ENCODE measurements at regions of chr14 and their contacts with region 1.

Region 1: DNA sequence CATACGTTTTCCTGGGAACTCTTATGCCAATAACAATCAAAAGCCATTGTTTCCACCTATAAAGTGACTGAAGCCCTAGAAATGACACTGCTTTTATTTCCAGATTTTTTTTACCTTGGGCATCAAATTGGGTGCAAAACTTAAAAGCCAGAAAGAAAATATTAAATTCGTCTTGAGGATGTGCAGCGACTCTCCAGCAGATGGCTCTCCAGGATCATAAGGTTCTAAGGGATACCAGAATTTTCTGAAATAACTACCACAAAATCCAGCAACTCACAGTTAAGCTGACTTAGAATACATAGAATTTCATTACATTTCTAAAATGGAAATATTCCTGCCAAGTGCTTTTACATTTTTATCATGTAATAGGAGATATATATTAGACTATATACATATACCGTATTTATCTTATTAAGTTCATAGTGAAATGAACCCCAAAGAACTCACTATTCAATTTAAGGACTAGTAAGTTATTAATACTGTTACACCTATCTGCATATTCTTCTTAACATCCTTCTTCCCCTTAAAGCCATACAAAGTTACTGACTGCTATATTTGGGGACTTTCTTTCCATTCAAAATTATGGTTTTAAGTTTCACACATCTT is 44.0 kb downstream of the ARMH4 start:
- DNase-seq: peak in 6 of 9 experiments; percentile 6 to 67 (median 27)
- ATAC-seq: peak; percentile 51
- H3K4me3 ChIP-seq: no peak overlapping the region
- H3K4me3 Mint-ChIP-seq: no peak overlapping the region
- H3K27ac ChIP-seq: no peak overlapping the region
- H3K27ac Mint-ChIP-seq: no peak overlapping the region
- H3K4me1 ChIP-seq: no peaks in the 10 kb centered on the region
- H3K4me1 Mint-ChIP-seq: no peaks in the 10 kb centered on the region
- H3K27me3 ChIP-seq: no peaks in the 10 kb centered on the region
- H3K27me3 Mint-ChIP-seq: peaks cover 16% of the 10 kb centered on the region
- CTCF ChIP-seq: peak; percentile 77

Region 2: DNA sequence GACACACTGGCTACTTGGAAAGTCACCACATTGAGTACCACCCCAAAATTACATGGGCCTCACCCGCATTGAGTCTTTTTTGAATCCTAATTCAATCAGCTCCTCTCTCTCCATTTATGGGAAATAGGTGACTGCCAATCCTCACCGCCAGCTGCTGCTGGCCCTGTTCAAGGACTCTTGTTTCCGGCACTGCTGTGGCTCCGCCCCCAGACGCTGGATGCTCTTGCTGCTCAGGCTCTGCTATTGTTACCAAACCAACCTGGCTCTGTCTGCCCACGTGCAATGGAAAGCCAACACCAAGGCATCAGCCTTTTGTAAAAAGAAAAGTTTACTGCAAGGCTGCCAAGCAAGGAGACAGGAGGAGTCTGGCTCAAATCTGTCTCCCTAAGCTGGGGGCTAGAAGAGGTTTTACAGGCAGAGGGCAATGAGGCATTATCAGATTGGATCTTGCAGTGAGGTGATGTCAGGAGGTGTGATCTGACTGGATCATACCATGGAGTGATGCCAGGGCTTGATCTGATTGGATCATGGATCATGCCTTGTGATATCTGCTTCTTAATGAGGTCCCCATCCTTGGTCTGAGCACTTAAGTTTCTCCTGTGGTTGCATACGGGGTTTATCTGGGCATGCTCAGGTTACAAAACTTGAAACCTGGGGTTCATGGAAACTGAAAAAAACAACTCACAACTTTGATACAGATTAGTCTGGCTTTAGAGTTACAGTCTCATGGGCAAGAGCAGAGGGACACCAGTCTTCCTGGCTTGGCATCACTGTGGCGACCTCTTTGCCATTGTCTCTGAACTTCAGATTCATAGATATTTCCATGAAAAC is 125.0 kb before region 1 on chr14:
- CTCF ChIA-PET with region 1: no interaction called
- POLR2A ChIA-PET with region 1: no interaction called
- intact Hi-C with region 1: no loop called
- DNase-seq: no peak
- ATAC-seq: no peak
- H3K4me3 ChIP-seq: no peak overlapping the region
- H3K4me3 Mint-ChIP-seq: no peak overlapping the region
- H3K27ac ChIP-seq: no peak overlapping the region
- H3K27ac Mint-ChIP-seq: no peak overlapping the region
- H3K4me1 ChIP-seq: no peaks in the 10 kb centered on the region
- H3K4me1 Mint-ChIP-seq: no peaks in the 10 kb centered on the region
- H3K27me3 ChIP-seq: no peaks in the 10 kb centered on the region
- H3K27me3 Mint-ChIP-seq: peaks cover 2% of the 10 kb centered on the region
- CTCF ChIP-seq: no peak

Region 3: DNA sequence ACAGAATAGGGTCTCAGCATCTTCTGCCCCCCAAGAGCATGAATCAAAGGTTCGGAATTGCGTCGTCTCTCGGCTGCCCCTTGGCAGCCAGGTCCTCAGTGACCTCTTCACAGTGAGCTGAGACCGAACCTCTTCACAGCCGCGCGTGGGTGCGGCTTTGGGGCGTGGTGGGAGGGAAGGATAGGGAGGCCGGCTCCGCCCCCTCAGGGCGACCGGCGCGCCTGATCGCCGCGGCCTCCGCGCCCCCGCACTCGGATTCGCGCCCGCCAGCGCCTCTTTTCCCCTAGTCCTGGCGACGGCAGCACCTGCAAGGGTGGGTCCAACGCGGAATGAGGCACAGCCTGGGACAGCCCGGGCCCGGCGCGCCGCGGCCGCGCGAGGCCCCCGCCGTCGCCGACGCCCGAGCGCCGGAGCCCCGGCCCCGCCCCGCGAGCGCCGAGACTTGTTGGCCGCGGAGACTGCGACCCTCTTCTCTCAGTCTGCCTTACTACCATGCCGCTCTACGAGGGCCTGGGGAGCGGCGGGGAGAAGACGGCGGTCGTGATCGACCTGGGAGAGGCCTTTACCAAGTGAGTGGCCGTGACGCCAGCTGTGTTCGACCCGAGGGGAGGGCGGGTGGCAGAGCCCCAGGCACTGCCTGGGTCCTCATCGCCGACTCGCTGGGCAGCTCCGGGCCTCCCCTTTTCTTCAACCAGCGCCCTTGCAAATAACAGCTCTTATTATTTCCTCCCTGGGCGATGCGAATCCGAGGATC is 91.9 kb after region 1 on chr14 and contains the start of gene ACTR10:
- CTCF ChIA-PET with region 1: no interaction called
- POLR2A ChIA-PET with region 1: no interaction called
- intact Hi-C with region 1: loop called in 1 of 2 experiments (anchors 1 kb)
- DNase-seq: peak; percentile 76 to 95 (median 85)
- ATAC-seq: peak; percentile 87
- H3K4me3 ChIP-seq: peak within 1 kb of the TSS; percentile 75 to 92
- H3K4me3 Mint-ChIP-seq: peak within 1 kb of the TSS; percentile 94
- H3K27ac ChIP-seq: peak within 1 kb of the TSS; percentile 86 to 87
- H3K27ac Mint-ChIP-seq: peak within 1 kb of the TSS; percentile 98
- H3K4me1 ChIP-seq: peaks cover 25% of the 10 kb centered on the region
- H3K4me1 Mint-ChIP-seq: peaks cover 46% of the 10 kb centered on the region
- H3K27me3 ChIP-seq: no peaks in the 10 kb centered on the region
- H3K27me3 Mint-ChIP-seq: no peaks in the 10 kb centered on the region
- CTCF ChIP-seq: no peak
- total RNA-seq, gene ACTR10: 47.5 to 47.7 TPM

Region 4: DNA sequence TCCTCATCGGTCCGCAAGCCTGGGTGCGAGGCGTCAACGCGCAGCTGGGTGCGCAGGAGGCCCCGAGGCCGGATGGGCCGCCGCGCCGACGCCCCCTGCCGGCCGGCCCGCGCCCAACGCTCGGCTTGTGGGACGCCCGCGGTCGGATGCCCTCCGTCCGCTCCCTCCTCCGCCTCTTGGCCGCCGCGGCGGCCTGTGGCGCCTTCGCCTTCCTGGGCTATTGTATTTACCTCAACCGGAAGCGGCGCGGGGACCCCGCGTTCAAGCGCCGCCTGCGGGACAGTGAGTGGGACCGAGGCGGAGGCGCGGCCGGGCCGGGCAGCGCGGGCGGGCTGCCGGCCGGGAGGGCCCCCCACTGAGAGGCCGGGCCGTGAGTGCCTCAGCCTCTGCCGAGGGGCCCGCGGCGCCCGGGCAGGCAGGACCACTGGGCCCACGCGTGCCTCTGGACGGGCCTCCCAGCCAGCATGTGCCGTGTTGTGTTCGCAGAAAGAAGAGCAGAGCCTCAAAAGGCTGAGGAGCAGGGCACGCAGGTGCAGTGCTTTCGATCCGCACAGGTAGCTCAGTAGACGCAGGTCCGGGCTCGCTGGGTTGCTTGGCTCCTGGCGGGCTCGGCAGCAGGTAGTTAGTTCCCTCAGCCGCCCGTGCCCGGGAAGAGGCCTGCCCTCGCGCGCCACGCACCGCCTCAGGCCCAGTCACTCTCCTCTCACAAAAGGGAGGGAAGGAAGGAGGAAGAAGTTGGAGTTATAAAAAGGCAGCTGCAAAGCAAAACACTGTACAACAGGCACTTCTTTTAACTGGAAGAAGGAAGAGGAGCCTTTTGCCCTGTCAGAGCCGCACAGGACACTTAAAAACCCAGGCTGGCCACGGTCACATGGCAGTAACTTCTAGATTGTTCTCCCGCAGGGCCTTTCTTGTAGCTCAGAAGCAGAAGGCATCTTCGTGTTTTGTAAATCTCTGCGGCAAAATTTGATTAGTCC is 288.1 kb after region 1 on chr14 and contains the start of gene TOMM20L:
- CTCF ChIA-PET with region 1: interaction called, 5 read pairs
- POLR2A ChIA-PET with region 1: no interaction called
- intact Hi-C with region 1: loop called (anchors 1 to 2 kb)
- DNase-seq: peak; percentile 48 to 86 (median 69)
- ATAC-seq: peak; percentile 81
- H3K4me3 ChIP-seq: peak within 1 kb of the TSS; percentile 27 to 59
- H3K4me3 Mint-ChIP-seq: peak within 1 kb of the TSS; percentile 84
- H3K27ac ChIP-seq: peak within 1 kb of the TSS; percentile 69 to 75
- H3K27ac Mint-ChIP-seq: peak within 1 kb of the TSS; percentile 93
- H3K4me1 ChIP-seq: peaks cover 9% of the 10 kb centered on the region
- H3K4me1 Mint-ChIP-seq: peaks cover 13% of the 10 kb centered on the region
- H3K27me3 ChIP-seq: no peaks in the 10 kb centered on the region
- H3K27me3 Mint-ChIP-seq: no peaks in the 10 kb centered on the region
- CTCF ChIP-seq: peak; percentile 94
- total RNA-seq, gene TOMM20L: 0.92 TPM in 1 of 2 experiments, not detected in the other

Region 5: GRCh38 chr14:58465401-58465800 is 357.4 kb after region 1 on chr14:
- CTCF ChIA-PET with region 1: no interaction called
- POLR2A ChIA-PET with region 1: no interaction called
- intact Hi-C with region 1: loop called in 1 of 2 experiments (anchors 5 kb)
- DNase-seq: no peak
- ATAC-seq: no peak
- H3K4me3 ChIP-seq: no peak overlapping the region
- H3K4me3 Mint-ChIP-seq: no peak overlapping the region
- H3K27ac ChIP-seq: no peak overlapping the region
- H3K27ac Mint-ChIP-seq: no peak overlapping the region
- H3K4me1 ChIP-seq: no peaks in the 10 kb centered on the region
- H3K4me1 Mint-ChIP-seq: no peaks in the 10 kb centered on the region
- H3K27me3 ChIP-seq: no peaks in the 10 kb centered on the region
- H3K27me3 Mint-ChIP-seq: no peaks in the 10 kb centered on the region
- CTCF ChIP-seq: no peak

Region 6: DNA sequence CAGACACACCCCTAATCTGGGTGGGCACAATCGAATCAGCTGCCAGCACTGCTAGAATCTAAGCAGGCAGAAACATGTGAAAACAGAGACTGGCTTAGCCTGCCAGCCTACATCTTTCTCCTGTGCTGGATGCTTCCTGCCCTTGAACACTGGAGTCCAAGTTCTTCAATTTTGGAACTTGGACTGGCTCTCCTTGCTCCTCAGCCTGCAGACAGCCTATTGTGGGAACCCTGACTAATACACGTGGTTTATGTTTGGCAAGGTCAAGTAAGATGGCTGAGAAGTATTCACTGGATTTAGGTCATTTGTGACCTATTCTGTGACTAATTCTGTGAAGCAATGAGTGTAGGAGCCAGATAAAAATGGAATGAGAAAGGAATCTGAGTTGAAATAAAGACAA is 1346.1 kb after region 1 on chr14:
- CTCF ChIA-PET with region 1: no interaction called
- POLR2A ChIA-PET with region 1: no interaction called
- intact Hi-C with region 1: loop called in 1 of 2 experiments (anchors 10 kb)
- DNase-seq: no peak
- ATAC-seq: no peak
- H3K4me3 ChIP-seq: no peak overlapping the region
- H3K4me3 Mint-ChIP-seq: no peak overlapping the region
- H3K27ac ChIP-seq: no peak overlapping the region
- H3K27ac Mint-ChIP-seq: no peak overlapping the region
- H3K4me1 ChIP-seq: no peaks in the 10 kb centered on the region
- H3K4me1 Mint-ChIP-seq: no peaks in the 10 kb centered on the region
- H3K27me3 ChIP-seq: no peaks in the 10 kb centered on the region
- H3K27me3 Mint-ChIP-seq: no peaks in the 10 kb centered on the region
- CTCF ChIP-seq: no peak